Dorsolateral prefrontal cortex (tissue), 120 donors: ENCODE measurements at regions of chr10 and their contacts with region 1.

Region 1: DNA sequence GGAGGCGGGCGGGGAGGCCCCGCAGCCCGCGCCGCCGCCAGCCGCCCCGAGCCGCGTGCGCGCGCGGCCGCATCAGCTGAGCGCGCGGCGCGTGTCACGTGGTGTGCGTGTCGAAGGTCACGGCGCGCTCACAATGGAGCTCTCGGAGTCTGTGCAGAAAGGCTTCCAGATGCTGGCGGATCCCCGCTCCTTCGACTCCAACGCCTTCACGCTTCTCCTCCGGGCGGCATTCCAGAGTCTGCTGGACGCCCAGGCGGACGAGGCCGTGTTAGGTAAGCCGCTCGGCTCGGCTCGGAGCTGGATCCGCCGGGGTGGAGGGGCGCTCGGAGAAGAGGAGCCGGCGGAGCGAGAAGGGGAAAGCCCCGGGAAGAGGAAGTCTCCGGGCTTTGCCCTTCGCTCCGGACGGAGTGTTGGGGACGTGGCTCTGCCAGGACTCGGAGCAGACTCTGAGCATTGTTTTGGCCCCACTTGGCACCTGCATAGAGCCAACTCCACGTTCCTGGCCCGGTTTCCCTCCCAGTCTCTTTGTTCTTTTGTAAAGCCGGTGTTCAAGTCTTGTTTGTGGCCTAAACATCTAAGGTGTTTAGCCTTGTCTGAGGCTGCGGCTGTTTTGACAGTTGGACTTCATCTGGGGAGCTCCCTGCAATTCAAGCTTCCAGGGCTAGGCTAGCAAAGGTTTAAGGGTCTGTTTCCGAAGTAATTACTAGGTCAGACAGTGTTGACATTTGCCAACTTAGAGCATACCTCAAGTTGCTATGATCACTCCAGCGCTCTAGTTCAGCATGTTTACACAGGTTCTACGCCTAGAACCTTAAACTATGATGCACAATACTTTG is at the start of gene COMMD3:
- DNase-seq: peak; percentile 78 to 91 (median 88)
- H3K4me3 ChIP-seq: peak within 1 kb of the TSS; percentile 63 to 98 (median 90)
- H3K27ac ChIP-seq: peak within 1 kb of the TSS; percentile 90 to 99 (median 97)
- H3K27me3 ChIP-seq: no peaks in the 10 kb centered on the region
- CTCF ChIP-seq: peak in 2 of 56 donors; percentile 2 to 25
- total RNA-seq, gene COMMD3: 26.2 to 65.4 (median 41.7) TPM

Region 2: GRCh38 chr10:21525367-21526183 is 790.9 kb before region 1 on chr10 and contains the start of gene SKIDA1:
- intact Hi-C with region 1: loop called in 1 of 2 experiments (anchors 5 kb)
- DNase-seq: peak in 9 of 10 donors; percentile 53 to 86 (median 70)
- H3K4me3 ChIP-seq: peak within 1 kb of the TSS; percentile 53 to 89 (median 77)
- H3K27ac ChIP-seq: peak within 1 kb of the TSS; percentile 90 to 100 (median 99)
- H3K27me3 ChIP-seq: no peaks in the 10 kb centered on the region
- CTCF ChIP-seq: peak in 11 of 56 donors; percentile 2 to 32 (median 14)
- total RNA-seq, gene SKIDA1: 2.0 to 8.9 (median 4.4) TPM

Region 3: GRCh38 chr10:22228943-22229801 is 87.3 kb before region 1 on chr10:
- intact Hi-C with region 1: loop called (anchors 1 to 2 kb)
- DNase-seq: peak; percentile 76 to 91 (median 84)
- H3K4me3 ChIP-seq: peak overlapping the region; percentile 55 to 93 (median 78)
- H3K27ac ChIP-seq: peak overlapping the region; percentile 73 to 100 (median 98)
- H3K27me3 ChIP-seq: no peaks in the 10 kb centered on the region
- CTCF ChIP-seq: peak in 15 of 56 donors; percentile 4 to 34 (median 15)

Region 4: GRCh38 chr10:22251751-22252223 is 64.7 kb before region 1 on chr10:
- intact Hi-C with region 1: loop called (anchors 2 kb)
- DNase-seq: peak; percentile 28 to 68 (median 64)
- H3K4me3 ChIP-seq: peak overlapping the region; percentile 56 to 96 (median 81)
- H3K27ac ChIP-seq: peak overlapping the region; percentile 97 to 100 (median 99)
- H3K27me3 ChIP-seq: no peaks in the 10 kb centered on the region
- CTCF ChIP-seq: peak in 1 of 56 donors; percentile 11

Region 5: GRCh38 chr10:22345301-22346095 is 29.0 kb after region 1 on chr10 and contains the start of gene SPAG6:
- intact Hi-C with region 1: no loop called
- DNase-seq: peak in 9 of 10 donors; percentile 50 to 80 (median 65)
- H3K4me3 ChIP-seq: peak within 1 kb of the TSS in 58 of 59 donors; percentile 24 to 75 (median 52)
- H3K27ac ChIP-seq: no peak within 1 kb of the TSS
- H3K27me3 ChIP-seq: peaks cover 6 to 64% (median 43%) of the 10 kb centered on the region in 45 donors
- CTCF ChIP-seq: no peak
- total RNA-seq, gene SPAG6: 0.97 to 12.5 (median 4.6) TPM